Heart left ventricle (tissue), 16 donors: ENCODE measurements at regions of chr7 and their contacts with region 1.

Region 1: DNA sequence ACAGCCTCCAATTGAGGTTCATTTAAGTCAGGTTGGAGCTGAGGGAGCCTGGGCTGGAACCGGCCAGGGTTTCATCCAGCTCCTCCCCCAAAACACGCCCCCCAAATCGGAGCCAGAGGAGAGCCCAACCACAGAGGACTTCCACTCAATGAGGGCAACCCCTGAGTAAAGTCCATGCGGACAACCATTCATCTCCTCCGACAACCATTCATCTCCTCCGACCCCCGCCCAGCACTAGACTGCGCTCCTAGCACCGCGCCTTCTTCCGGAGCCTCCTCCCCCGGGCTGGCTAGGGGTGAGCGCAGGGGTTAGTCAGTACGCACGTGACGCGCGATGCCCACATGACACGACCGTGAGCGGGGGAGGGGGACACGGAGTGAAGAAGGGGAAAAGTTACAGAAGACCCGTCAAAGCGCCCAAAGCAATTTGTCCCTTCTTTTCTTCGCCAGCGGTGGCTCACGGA is 1.4 kb downstream of the MAGI2 start:
- DNase-seq: peak; percentile 84 to 92 (median 87)
- ATAC-seq: peak; percentile 84 to 90 (median 87)
- H3K4me3 ChIP-seq: peak overlapping the region; percentile 64 to 93 (median 74)
- H3K27ac ChIP-seq: peak overlapping the region; percentile 47 to 98 (median 91)
- H3K4me1 ChIP-seq: peaks cover 0 to 32% (median 20%) of the 10 kb centered on the region in 12 donors
- H3K27me3 ChIP-seq: peaks cover 0 to 14% (median 0%) of the 10 kb centered on the region in 9 donors
- CTCF ChIP-seq: no peak
- POLR2A ChIP-seq: peak in 1 of 2 donors; percentile 38

Region 2: DNA sequence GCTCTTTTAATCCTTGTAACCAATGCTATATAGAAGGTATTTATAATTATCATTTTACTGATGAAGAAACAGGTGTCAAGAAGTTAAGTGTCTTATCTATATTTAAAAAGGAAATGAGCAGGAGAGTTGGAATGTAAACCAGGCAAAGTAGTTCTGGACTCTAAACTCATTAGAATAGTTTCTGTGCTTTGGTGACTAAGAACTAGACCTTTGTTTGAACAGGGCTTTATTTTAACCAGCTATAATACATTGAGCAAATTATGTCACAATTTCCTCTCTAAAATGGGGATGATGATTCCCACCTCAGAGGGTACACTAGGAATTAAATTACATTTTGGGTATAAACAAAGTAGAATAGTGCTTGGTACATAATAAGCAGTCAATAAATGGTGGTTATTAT is 234.6 kb before region 1 on chr7:
- intact Hi-C with region 1: no loop called
- DNase-seq: no peak
- ATAC-seq: no peak
- H3K4me3 ChIP-seq: no peak overlapping the region
- H3K27ac ChIP-seq: no peak overlapping the region
- H3K4me1 ChIP-seq: no peaks in the 10 kb centered on the region
- H3K27me3 ChIP-seq: no peaks in the 10 kb centered on the region
- CTCF ChIP-seq: no peak
- POLR2A ChIP-seq: no peak

Region 3: DNA sequence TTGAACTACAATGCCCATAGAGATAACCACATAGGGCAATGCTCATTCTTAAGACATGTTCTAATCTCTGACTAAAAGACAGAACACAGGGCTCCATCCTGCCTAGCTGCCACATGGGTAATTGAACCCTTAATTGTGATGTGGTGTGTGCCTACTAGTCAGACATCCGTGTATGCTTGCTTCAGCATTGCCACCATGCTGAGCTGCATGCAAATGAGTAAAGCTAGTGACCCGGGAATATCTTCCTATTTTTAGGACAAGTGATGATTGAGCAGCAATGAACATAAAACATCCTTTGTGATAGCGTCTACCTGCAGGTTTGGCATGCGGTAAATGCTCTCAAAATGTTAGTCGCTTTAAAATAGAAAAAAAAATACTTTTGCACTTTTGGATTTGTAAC is 114.3 kb before region 1 on chr7:
- intact Hi-C with region 1: loop called in 1 of 10 experiments (anchors 10 kb)
- DNase-seq: peak in 1 of 5 donors; percentile 13
- ATAC-seq: peak in 3 of 4 donors; percentile 36 to 68 (median 59)
- H3K4me3 ChIP-seq: peak overlapping the region in 4 of 12 donors; percentile 13 to 30 (median 20)
- H3K27ac ChIP-seq: no peak overlapping the region
- H3K4me1 ChIP-seq: peaks cover 0 to 4% (median 0%) of the 10 kb centered on the region in 12 donors
- H3K27me3 ChIP-seq: no peaks in the 10 kb centered on the region
- CTCF ChIP-seq: no peak
- POLR2A ChIP-seq: no peak

Region 4: DNA sequence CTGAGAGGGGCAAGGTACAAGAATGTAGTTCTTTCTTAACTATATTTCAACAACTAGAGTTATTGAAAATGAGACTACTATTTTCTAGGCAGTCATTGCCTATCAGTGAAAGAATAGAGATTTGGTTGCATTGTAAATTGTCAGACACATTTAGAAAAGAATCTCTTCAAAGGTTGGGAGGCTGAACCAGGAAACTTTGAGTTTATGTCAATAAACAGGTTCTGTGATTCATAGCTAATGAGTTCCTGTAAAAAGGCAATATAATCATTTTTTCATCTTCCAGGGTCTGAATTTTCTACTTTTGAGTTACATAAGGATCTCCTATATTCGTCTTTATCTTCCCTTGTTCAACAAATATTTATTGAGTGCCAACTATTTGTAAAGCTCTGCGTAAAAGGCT is 45.7 kb before region 1 on chr7:
- intact Hi-C with region 1: loop called in 2 of 10 experiments (anchors 5 kb)
- DNase-seq: no peak
- ATAC-seq: no peak
- H3K4me3 ChIP-seq: no peak overlapping the region
- H3K27ac ChIP-seq: no peak overlapping the region
- H3K4me1 ChIP-seq: peaks cover 0 to 49% (median 9%) of the 10 kb centered on the region in 12 donors
- H3K27me3 ChIP-seq: no peaks in the 10 kb centered on the region
- CTCF ChIP-seq: no peak
- POLR2A ChIP-seq: no peak